ENCODE measurements at regions of chr6 and their contacts with region 1.

Region 1: DNA sequence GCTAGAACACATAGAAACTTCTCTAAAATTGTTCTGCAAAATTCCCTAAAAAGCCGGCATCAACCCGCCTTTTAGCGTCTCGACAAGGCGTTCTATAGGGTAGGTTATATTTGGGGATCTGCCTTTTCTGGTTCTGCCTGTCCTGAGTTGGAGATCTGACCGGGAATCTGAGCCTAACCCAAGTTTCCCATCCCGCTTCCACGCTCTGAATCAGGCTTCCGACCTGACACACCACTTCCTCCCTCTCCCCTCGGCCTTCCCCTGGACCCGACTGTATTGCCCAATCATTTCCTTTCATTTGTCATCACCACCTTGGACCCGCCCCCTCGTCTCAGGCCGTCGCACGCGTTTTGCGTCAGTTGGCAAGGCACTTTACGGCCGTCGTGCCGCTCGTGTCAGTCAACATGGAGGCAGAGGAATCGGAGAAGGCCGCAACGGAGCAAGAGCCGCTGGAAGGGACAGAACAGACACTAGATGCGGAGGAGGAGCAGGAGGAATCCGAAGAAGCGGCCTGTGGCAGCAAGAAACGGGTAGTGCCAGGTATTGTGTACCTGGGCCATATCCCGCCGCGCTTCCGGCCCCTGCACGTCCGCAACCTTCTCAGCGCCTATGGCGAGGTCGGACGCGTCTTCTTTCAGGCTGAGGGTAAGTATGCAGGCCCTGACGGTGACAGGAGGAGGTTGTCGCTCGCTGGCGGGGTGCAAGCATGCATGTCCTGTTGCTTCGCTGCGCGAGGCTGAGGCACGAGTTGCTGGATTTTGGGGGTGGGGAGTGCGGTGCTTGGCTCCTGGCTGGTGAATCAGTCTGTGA is at the start of gene ABT1:
- DNase-seq: peak; percentile 94 to 99 (median 97)
- ATAC-seq: peak; percentile 85
- H3K4me3 ChIP-seq: peak within 1 kb of the TSS; percentile 93 to 94
- H3K4me3 Mint-ChIP-seq: no peak within 1 kb of the TSS
- H3K27ac ChIP-seq: peak within 1 kb of the TSS; percentile 90 to 94
- H3K27ac Mint-ChIP-seq: no peak within 1 kb of the TSS
- H3K4me1 ChIP-seq: peaks cover 18% of the 10 kb centered on the region
- H3K4me1 Mint-ChIP-seq: peaks cover 23% of the 10 kb centered on the region
- H3K27me3 ChIP-seq: peaks cover 0 to 4% of the 10 kb centered on the region in 2 experiments
- H3K27me3 Mint-ChIP-seq: peaks cover 10% of the 10 kb centered on the region
- CTCF ChIP-seq: no peak
- total RNA-seq, gene ABT1: 42.5 to 44.2 TPM

Region 2: GRCh38 chr6:26175428-26176181 is 421.2 kb before region 1 on chr6:
- CTCF ChIA-PET with region 1: interaction called, 4 read pairs
- POLR2A ChIA-PET with region 1: no interaction called
- intact Hi-C with region 1: loop called (anchors 1 kb)
- DNase-seq: peak in 7 of 9 experiments; percentile 33 to 87 (median 53)
- ATAC-seq: no peak
- H3K4me3 ChIP-seq: no peak overlapping the region
- H3K4me3 Mint-ChIP-seq: peak overlapping the region; percentile 3
- H3K27ac ChIP-seq: no peak overlapping the region
- H3K27ac Mint-ChIP-seq: peak overlapping the region; percentile 63
- H3K4me1 ChIP-seq: peaks cover 26% of the 10 kb centered on the region
- H3K4me1 Mint-ChIP-seq: peaks cover 39% of the 10 kb centered on the region
- H3K27me3 ChIP-seq: no peaks in the 10 kb centered on the region
- H3K27me3 Mint-ChIP-seq: no peaks in the 10 kb centered on the region
- CTCF ChIP-seq: peak; percentile 93

Region 3: GRCh38 chr6:26520853-26521599 is 75.8 kb before region 1 on chr6:
- CTCF ChIA-PET with region 1: no interaction called
- POLR2A ChIA-PET with region 1: no interaction called
- intact Hi-C with region 1: loop called (anchors 1 to 2 kb)
- DNase-seq: peak; percentile 69 to 94 (median 86)
- ATAC-seq: peak; percentile 80
- H3K4me3 ChIP-seq: peak overlapping the region; percentile 50 to 57
- H3K4me3 Mint-ChIP-seq: peak overlapping the region; percentile 83
- H3K27ac ChIP-seq: peak overlapping the region; percentile 35 to 86
- H3K27ac Mint-ChIP-seq: peak overlapping the region; percentile 83
- H3K4me1 ChIP-seq: peaks cover 8% of the 10 kb centered on the region
- H3K4me1 Mint-ChIP-seq: peaks cover 31% of the 10 kb centered on the region
- H3K27me3 ChIP-seq: no peaks in the 10 kb centered on the region
- H3K27me3 Mint-ChIP-seq: no peaks in the 10 kb centered on the region
- CTCF ChIP-seq: no peak

Region 4: GRCh38 chr6:26568601-26569432 is 28.0 kb before region 1 on chr6:
- CTCF ChIA-PET with region 1: interaction called, 61 read pairs
- POLR2A ChIA-PET with region 1: interaction called, 10 read pairs
- intact Hi-C with region 1: loop called (anchors 1 kb)
- DNase-seq: peak; percentile 95 to 100 (median 99)
- ATAC-seq: peak; percentile 73
- H3K4me3 ChIP-seq: peak overlapping the region; percentile 74 to 90
- H3K4me3 Mint-ChIP-seq: peak overlapping the region; percentile 92
- H3K27ac ChIP-seq: peak overlapping the region; percentile 79 to 80
- H3K27ac Mint-ChIP-seq: peak overlapping the region; percentile 97
- H3K4me1 ChIP-seq: peaks cover 15% of the 10 kb centered on the region
- H3K4me1 Mint-ChIP-seq: peaks cover 20% of the 10 kb centered on the region
- H3K27me3 ChIP-seq: no peaks in the 10 kb centered on the region
- H3K27me3 Mint-ChIP-seq: peaks cover 2% of the 10 kb centered on the region
- CTCF ChIP-seq: peak; percentile 34

Region 5: GRCh38 chr6:26659042-26659999 is 62.5 kb after region 1 on chr6 and contains the start of gene ZNF322:
- CTCF ChIA-PET with region 1: no interaction called
- POLR2A ChIA-PET with region 1: no interaction called
- intact Hi-C with region 1: loop called in 1 of 2 experiments (anchors 1 kb)
- DNase-seq: peak; percentile 69 to 92 (median 86)
- ATAC-seq: peak; percentile 96
- H3K4me3 ChIP-seq: peak within 1 kb of the TSS; percentile 82 to 90
- H3K4me3 Mint-ChIP-seq: peak within 1 kb of the TSS; percentile 86
- H3K27ac ChIP-seq: peak within 1 kb of the TSS; percentile 55 to 60
- H3K27ac Mint-ChIP-seq: peak within 1 kb of the TSS; percentile 56
- H3K4me1 ChIP-seq: peaks cover 9% of the 10 kb centered on the region
- H3K4me1 Mint-ChIP-seq: peaks cover 36% of the 10 kb centered on the region
- H3K27me3 ChIP-seq: peaks cover 0 to 7% of the 10 kb centered on the region in 2 experiments
- H3K27me3 Mint-ChIP-seq: peaks cover 17% of the 10 kb centered on the region
- CTCF ChIP-seq: no peak
- total RNA-seq, gene ZNF322: 0.35 to 0.94 TPM